ENCODE measurements at regions of chr15 and their contacts with region 1.

Region 1: DNA sequence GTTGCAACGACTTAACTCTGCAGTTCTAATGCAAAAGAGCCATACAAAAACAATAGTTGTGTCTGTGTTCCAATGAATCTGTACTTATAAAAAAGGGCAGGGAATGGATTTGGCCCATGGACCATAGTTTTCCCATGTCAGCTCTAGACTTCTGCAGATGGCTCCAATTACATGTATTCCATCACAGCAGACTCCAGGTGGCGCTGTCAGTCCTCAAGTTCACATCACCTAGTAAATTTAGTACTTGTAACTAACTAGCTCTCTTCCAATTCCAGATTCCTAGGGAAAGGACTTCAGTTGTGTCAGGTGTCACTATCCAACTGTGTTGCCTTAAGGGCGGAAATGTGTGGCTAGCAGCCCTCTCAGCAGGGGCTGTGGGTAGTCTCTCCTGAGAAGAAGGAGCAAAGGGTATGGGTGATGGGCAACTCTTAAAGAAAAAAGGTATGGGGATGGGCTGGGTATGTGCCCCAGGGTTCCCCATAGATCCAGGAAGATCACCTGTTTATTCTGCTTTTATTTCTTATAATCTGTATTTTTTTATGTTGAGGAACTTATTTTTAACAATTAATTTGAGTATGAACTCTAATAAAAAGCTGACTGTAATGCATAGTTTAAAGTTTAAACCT is 36.2 kb downstream of the BBS4 start:
- DNase-seq: peak; percentile 76
- H3K4me3 ChIP-seq: no peak overlapping the region
- H3K27ac ChIP-seq: no peak overlapping the region
- H3K4me1 ChIP-seq: no peaks in the 10 kb centered on the region
- H3K27me3 ChIP-seq: no peaks in the 10 kb centered on the region
- CTCF ChIP-seq: peak; percentile 89

Region 2: DNA sequence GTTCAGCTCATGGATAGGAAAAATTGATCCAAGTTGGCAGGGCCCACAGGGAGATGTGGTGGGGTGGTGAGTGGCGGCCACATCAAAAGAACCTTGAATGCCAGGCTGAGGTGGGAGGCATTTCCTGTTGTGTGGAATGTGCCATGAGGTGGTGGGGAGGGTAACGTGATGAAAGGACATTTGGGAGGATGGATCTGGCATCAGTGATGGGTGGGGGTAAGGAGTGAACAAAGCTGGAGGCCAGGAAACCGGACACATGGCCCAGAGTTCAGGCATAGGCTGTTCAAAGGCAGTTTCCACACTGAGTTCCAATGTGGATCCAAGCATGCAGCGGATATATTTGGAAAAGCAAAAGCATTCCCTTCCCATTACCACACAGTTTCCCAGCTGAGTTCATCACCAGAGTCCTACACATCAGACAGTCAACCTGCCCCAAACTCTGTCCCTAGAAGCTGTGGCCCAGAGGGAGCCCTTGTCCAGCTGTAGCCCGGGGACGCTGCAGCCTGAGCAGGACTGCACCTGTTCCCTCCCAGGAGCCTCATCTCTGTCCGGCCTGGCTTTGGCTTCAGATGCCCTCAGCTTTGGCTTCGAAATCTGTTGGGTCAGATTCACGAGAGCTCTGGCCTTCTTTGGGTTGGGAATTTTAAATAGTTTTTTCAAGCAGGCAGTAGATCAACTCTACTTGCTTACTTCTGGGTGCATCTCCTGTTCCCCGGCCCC is 105.5 kb before region 1 on chr15:
- CTCF ChIA-PET with region 1: no interaction called
- POLR2A ChIA-PET with region 1: no interaction called
- intact Hi-C with region 1: no loop called
- DNase-seq: no peak
- H3K4me3 ChIP-seq: no peak overlapping the region
- H3K27ac ChIP-seq: no peak overlapping the region
- H3K4me1 ChIP-seq: no peaks in the 10 kb centered on the region
- H3K27me3 ChIP-seq: no peaks in the 10 kb centered on the region
- CTCF ChIP-seq: no peak

Region 3: GRCh38 chr15:72706266-72706665 is 15.9 kb before region 1 on chr15:
- CTCF ChIA-PET with region 1: interaction called, 10 read pairs
- POLR2A ChIA-PET with region 1: interaction called, 18 read pairs
- intact Hi-C with region 1: no loop called
- DNase-seq: peak; percentile 5
- H3K4me3 ChIP-seq: no peak overlapping the region
- H3K27ac ChIP-seq: no peak overlapping the region
- H3K4me1 ChIP-seq: no peaks in the 10 kb centered on the region
- H3K27me3 ChIP-seq: no peaks in the 10 kb centered on the region
- CTCF ChIP-seq: no peak

Region 4: GRCh38 chr15:72770673-72771328 is 48.6 kb after region 1 on chr15:
- CTCF ChIA-PET with region 1: interaction called, 13 read pairs
- POLR2A ChIA-PET with region 1: no interaction called
- intact Hi-C with region 1: no loop called
- DNase-seq: no peak
- H3K4me3 ChIP-seq: no peak overlapping the region
- H3K27ac ChIP-seq: no peak overlapping the region
- H3K4me1 ChIP-seq: no peaks in the 10 kb centered on the region
- H3K27me3 ChIP-seq: no peaks in the 10 kb centered on the region
- CTCF ChIP-seq: 0 out of 2 replicates have a peak, but pooled peaks have one; percentile 27

Region 5: DNA sequence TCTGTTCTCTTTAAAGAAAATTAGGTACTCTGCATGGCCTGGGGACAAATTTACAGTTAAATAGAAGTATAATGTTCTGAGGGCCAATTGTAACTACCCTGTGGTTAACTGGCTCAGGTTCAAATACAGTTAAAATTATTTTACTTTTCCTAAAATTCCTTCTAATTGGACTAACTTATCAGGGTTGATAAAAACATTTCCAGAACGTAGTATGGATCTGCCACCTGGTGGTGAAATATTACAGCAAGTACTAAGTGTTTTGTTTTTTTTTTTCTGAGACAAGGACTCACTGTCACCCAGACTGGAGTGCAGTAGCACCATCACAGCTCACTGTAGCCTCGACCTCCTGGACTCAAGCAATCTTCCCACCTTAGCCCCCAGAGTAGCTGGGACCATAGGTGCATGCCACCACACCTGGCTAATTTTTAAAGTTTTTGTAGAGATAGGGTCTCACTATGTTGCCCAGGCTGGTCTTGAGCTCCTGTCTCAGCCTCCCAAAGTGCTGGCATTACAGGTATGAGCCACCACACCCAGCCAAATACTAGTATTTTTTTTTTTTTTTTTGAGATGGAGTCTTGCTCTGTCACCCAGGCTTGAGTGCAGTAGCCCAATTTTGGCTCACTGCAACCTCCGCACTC is 359.3 kb after region 1 on chr15:
- CTCF ChIA-PET with region 1: interaction called, 9 read pairs
- POLR2A ChIA-PET with region 1: no interaction called
- intact Hi-C with region 1: loop called (anchors 10 kb)
- DNase-seq: peak; percentile 73
- H3K4me3 ChIP-seq: no peak overlapping the region
- H3K27ac ChIP-seq: no peak overlapping the region
- H3K4me1 ChIP-seq: peaks cover 43% of the 10 kb centered on the region
- H3K27me3 ChIP-seq: no peaks in the 10 kb centered on the region
- CTCF ChIP-seq: peak; percentile 72

Region 6: DNA sequence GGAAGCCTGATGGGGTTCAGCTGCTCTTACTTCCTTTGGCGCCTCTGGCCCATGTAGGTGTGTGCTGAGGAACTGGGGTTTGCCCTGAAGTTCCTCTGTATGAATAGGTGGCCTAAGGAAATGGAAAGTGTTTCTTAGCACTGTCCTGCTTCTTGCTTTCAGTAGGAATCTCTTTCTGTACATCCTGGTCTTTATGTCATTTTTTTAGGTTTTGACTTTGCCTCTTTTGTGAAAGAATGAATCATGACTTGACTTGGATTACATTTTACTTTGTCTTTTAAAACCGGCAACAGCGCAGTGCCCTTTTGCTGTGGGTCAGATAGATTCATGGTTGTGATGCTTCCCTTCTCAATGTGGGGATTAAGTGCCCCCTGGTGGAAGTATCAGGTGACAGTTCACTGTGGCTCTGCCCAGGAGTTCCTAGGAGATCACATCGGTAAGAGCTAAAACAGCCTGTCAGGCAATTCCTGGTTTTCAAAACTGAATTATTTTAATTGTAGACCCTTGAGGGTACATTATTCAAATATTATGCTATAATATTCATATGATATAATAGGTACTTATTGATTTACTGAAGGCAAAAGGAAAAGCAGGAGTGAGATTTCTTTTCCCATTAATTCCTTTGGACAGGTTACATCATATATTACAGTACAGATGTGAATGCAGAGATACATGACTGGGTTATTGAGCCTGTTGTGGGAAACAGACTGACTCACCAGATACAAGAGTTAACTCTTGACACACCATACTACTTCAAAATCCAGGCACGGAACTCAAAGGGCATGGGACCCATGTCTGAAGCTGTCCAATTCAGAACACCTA is 551.2 kb after region 1 on chr15:
- CTCF ChIA-PET with region 1: no interaction called
- POLR2A ChIA-PET with region 1: no interaction called
- intact Hi-C with region 1: loop called (anchors 5 kb)
- DNase-seq: peak; percentile 66
- H3K4me3 ChIP-seq: no peak overlapping the region
- H3K27ac ChIP-seq: no peak overlapping the region
- H3K4me1 ChIP-seq: no peaks in the 10 kb centered on the region
- H3K27me3 ChIP-seq: no peaks in the 10 kb centered on the region
- CTCF ChIP-seq: peak; percentile 83

Measured in A673 (cell line).